Common myeloid progenitor, CD34-positive (primary cell): ENCODE measurements at regions of chr3 and their contacts with region 1.

Region 1: DNA sequence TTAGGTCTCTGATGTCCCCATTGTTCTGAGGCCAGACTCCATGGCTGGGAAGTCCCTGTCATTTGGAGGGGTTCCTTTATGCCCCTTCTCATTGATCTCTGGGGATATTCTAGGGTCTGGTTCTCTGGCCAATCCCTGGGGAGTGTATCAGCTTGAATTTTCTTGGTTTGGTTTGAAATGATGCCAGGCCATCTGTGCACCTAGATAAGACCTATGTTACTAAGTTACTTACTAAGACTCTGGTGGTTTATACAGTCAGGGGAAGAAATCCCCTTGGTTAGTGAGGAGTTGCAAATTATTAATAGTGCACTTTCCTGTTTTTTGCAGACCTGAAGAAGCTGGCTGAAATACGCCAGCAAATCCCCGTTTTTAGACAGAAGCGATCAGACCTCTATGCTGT is 20.3 kb downstream of the NIT2 start:
- DNase-seq: peak; percentile 61 to 93 (median 90)
- H3K4me3 ChIP-seq: peak overlapping the region in 1 of 7 experiments; percentile 23
- H3K27ac ChIP-seq: no peak overlapping the region
- H3K4me1 ChIP-seq: peaks cover 0 to 18% (median 6%) of the 10 kb centered on the region in 4 experiments
- H3K27me3 ChIP-seq: no peaks in the 10 kb centered on the region

Region 2: GRCh38 chr3:100334488-100335351 is 20.1 kb before region 1 on chr3 and contains the start of gene NIT2:
- CTCF ChIA-PET with region 1: interaction called, 7 read pairs
- POLR2A ChIA-PET with region 1: interaction called, 10 read pairs
- DNase-seq: peak; percentile 85 to 90 (median 87)
- H3K4me3 ChIP-seq: peak within 1 kb of the TSS; percentile 64 to 90 (median 78)
- H3K27ac ChIP-seq: peak within 1 kb of the TSS; percentile 50 to 66
- H3K4me1 ChIP-seq: peaks cover 0 to 24% (median 19%) of the 10 kb centered on the region in 4 experiments
- H3K27me3 ChIP-seq: no peaks in the 10 kb centered on the region